Gastrocnemius medialis (tissue), 4 donors: ENCODE measurements at regions of chr6 and their contacts with region 1.

Region 1: GRCh38 chr6:99434702-99435530 is 9.8 kb upstream of the PNISR start:
- DNase-seq: no peak
- ATAC-seq: peak in 1 of 2 donors; percentile 75
- H3K4me3 ChIP-seq: no peak overlapping the region
- H3K27ac ChIP-seq: no peak overlapping the region
- H3K4me1 ChIP-seq: no peaks in the 10 kb centered on the region
- H3K27me3 ChIP-seq: no peaks in the 10 kb centered on the region
- CTCF ChIP-seq: peak; percentile 38 to 83 (median 57)
- POLR2A ChIP-seq: no peak

Region 2: DNA sequence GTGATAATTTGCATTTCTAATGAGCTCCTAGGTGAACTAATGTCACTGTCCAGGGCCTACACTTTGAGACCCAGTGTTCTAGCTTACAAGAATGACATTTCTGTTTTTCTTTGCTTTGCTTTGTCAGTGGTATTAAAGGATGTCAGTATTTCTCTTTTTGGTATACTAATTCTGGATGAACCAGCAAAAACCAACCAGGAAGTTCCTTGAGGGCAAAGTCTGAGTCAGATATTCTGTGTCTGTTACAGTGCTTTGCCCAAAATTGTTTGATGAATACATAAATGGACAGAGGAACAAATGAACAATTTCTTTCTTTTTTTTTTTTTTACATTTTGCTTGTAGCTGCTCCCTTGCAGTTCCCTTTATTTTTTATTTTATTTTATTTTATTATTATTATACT is 56.3 kb before region 1 on chr6:
- in situ Hi-C with region 1: no loop called
- intact Hi-C with region 1: no loop called
- DNase-seq: no peak
- ATAC-seq: no peak
- H3K4me3 ChIP-seq: no peak overlapping the region
- H3K27ac ChIP-seq: no peak overlapping the region
- H3K4me1 ChIP-seq: no peaks in the 10 kb centered on the region
- H3K27me3 ChIP-seq: no peaks in the 10 kb centered on the region
- CTCF ChIP-seq: no peak
- POLR2A ChIP-seq: no peak

Region 3: DNA sequence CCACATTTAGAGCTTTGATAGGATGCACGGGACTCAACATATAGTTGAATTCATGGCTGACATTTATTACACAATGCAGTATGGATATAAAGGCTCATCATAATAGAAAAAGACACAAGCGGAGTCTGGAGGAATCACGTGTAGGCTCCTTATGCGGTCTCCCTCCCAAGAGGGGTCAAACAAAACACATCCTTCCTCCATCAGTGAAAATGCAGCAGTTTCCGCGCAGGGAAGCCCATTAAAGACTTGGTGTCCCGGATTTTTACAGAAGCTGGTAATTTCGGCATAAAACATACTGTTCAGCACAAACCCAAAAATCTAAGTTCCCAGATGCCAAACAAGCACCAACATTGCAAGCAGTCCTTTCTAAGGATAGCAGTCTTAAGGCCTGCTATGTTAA is 79.2 kb after region 1 on chr6:
- in situ Hi-C with region 1: loop called in 1 of 4 experiments (anchors 10 kb)
- intact Hi-C with region 1: no loop called
- DNase-seq: no peak
- ATAC-seq: no peak
- H3K4me3 ChIP-seq: peak overlapping the region; percentile 61 to 87 (median 74)
- H3K27ac ChIP-seq: peak overlapping the region in 3 of 4 donors; percentile 86 to 95 (median 92)
- H3K4me1 ChIP-seq: peaks cover 15 to 27% of the 10 kb centered on the region in 2 donors
- H3K27me3 ChIP-seq: no peaks in the 10 kb centered on the region
- CTCF ChIP-seq: no peak
- POLR2A ChIP-seq: no peak

Region 4: GRCh38 chr6:99836471-99836870 is 401.6 kb after region 1 on chr6:
- in situ Hi-C with region 1: no loop called
- intact Hi-C with region 1: no loop called
- DNase-seq: no peak
- ATAC-seq: no peak
- H3K4me3 ChIP-seq: no peak overlapping the region
- H3K27ac ChIP-seq: no peak overlapping the region
- H3K4me1 ChIP-seq: no peaks in the 10 kb centered on the region
- H3K27me3 ChIP-seq: no peaks in the 10 kb centered on the region
- CTCF ChIP-seq: no peak
- POLR2A ChIP-seq: no peak